Mucosa of descending colon (tissue), 3 donors: ENCODE measurements at regions of chr2 and their contacts with region 1.

Region 1: DNA sequence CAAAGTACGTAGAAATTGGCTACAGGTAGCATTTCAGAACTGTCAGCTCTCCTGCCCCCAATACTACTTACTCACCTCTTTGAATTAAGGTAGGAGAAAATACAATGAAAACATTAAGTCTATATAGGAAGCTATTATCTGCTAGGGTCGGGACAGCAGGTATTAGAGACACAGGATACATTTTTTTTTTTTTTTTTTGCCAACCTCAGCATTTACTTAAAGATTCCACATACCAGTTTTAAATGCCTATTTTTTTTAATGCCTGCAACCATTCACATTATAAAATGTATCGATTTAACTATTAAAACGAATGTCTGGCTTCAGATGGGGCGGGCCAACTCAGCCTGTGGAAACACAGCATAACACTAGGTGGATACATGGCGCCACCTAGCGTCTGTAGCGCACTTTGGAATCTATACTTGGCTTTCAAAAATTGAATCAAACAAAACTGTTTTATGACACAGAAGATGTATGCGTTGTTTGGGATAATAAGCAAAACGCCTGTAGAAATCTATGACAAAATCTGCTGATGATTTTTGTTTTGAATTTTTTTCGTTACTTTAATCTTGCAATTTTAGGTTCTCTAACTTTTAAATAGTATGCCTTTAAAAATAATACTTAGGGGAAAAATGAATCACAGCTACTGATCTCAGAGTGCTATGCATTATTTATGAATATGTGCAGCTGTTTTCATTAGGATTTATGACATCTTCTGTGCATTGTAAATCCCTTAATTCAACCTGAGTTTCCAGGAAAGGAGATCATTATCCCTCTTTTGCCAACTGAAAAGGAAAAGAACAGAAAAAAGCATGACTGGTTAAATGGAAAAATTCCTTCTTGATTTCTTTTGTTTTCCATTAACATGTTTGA is 261.0 kb downstream of the NYAP2 start:
- DNase-seq: peak; percentile 55 to 91 (median 74)
- ATAC-seq: peak; percentile 77
- H3K4me3 ChIP-seq: no peak overlapping the region
- H3K4me1 ChIP-seq: no peaks in the 10 kb centered on the region
- CTCF ChIP-seq: peak; percentile 54

Region 2: DNA sequence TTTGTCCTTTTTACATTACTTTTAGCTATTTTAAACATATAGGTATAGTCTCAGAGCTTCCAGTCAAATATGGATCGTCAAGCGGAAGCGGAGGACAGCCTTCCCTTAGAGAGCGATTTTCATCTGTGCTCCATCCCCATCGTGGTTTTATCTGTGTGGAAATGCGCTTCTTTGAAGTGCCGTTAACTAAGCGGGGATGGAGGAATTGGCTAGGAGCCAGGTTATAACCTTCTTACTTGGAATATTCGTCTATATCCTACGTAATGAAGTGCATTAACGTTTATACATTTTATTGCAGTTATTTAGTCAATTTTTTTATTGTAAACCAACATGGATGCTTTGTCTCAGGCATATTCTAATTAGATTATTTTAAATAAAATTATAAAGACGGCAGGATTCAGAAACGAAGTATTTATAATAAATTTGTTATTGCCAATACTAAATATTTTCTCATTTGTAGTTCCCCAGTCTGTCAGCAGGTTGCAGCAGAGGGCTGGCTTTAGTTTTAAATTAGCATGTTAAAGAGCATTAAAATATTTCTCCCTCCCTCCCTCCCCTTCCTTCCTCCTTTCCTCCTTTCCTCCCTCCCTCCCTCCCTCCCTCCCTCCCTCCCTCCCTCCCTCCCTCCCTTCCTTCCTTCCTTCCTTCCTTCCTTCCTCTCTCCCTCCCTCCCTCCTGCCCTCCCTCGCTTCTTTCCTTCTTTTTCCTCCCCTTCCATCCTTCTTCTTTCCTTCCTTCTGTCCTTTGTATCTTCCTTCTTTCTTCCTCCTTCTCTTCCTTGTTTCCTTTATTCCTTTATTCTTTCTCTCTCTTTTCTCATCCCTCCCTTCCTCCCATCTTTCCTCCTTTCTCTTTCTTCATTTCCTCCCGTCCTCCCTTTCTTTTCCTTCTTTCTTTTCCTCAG is 537.7 kb before region 1 on chr2:
- intact Hi-C with region 1: loop called in 1 of 2 experiments (anchors 10 kb)
- DNase-seq: peak in 1 of 3 donors; percentile 57
- ATAC-seq: no peak
- H3K4me3 ChIP-seq: no peak overlapping the region
- H3K4me1 ChIP-seq: no peaks in the 10 kb centered on the region
- CTCF ChIP-seq: peak; percentile 30

Region 3: GRCh38 chr2:225282858-225283710 is 377.4 kb before region 1 on chr2:
- intact Hi-C with region 1: loop called in 1 of 2 experiments (anchors 2 kb)
- DNase-seq: peak in 1 of 3 donors; percentile 35
- ATAC-seq: peak; percentile 43
- H3K4me3 ChIP-seq: no peak overlapping the region
- H3K4me1 ChIP-seq: no peaks in the 10 kb centered on the region
- CTCF ChIP-seq: peak; percentile 43

Region 4: GRCh38 chr2:225600444-225600843 is 60.1 kb before region 1 on chr2:
- intact Hi-C with region 1: no loop called
- DNase-seq: no peak
- ATAC-seq: no peak
- H3K4me3 ChIP-seq: no peak overlapping the region
- H3K4me1 ChIP-seq: no peaks in the 10 kb centered on the region
- CTCF ChIP-seq: no peak

Region 5: GRCh38 chr2:225779829-225780228 is 119.3 kb after region 1 on chr2:
- intact Hi-C with region 1: no loop called
- DNase-seq: no peak
- ATAC-seq: no peak
- H3K4me3 ChIP-seq: no peak overlapping the region
- H3K4me1 ChIP-seq: no peaks in the 10 kb centered on the region
- CTCF ChIP-seq: no peak